ENCODE measurements at regions of chr17 and their contacts with region 1.

Region 1: GRCh38 chr17:49997791-49998703 is 3.0 kb upstream of the DLX3 start:
- DNase-seq: peak; percentile 58 to 91
- H3K4me3 ChIP-seq: no peak overlapping the region
- H3K27ac ChIP-seq: no peak overlapping the region
- H3K4me1 ChIP-seq: peaks cover 3 to 29% (median 11%) of the 10 kb centered on the region in 4 experiments; a peak in 6 of 7 replicates
- H3K27me3 ChIP-seq: peaks cover 32 to 66% (median 52%) of the 10 kb centered on the region in 4 experiments
- CTCF ChIP-seq: peak; percentile 72 to 94 (median 92)
- EP300 ChIP-seq: no peak
- POLR2A ChIP-seq: no peak
- RAD21 ChIP-seq: peak; percentile 99

Region 2: DNA sequence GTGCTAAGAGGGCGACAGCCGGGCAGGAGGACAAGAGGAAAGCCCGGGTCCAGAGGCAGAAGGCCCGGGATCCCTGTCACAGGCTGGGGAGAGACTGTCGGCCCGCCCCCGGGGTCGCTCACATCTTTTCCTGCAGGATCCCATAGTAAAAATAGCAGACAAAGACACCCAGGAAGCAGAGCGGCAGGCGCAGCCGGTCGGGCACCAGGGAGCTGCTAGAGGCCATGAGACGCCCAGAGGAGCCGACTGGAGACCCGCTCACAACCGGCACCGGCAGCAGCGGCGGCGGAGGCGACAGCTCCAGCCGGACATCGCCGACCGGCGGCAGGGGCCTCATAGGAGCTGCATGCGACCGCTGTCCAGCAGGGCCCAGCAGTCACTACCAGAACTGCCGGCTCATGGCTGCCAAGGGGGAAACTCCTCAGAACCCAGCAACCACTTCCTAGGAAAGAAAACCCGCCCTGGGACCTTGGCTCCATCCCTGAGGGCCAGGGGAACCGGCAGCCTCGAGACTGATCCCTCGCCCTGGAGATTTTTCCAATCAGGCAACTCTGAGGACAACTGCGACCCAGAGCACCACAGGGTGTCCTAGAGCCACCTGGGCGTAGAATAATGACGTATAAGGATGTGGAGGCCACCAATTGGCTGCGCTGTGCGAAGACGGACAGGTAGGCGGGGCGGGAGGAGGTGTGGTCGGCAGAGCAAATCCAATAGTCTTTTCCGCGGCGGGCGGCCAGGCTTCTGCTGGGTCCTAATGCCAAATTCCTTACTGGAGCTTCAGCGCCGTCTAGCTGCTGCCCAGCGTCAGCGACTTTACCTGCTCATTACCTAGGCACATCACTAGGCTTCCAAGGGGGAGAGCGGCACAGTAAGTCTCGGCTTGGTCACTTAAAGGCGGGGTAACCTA is 290.2 kb before region 1 on chr17 and contains the start of gene SLC35B1:
- CTCF ChIA-PET with region 1: interaction called, 34 read pairs
- POLR2A ChIA-PET with region 1: no interaction called
- DNase-seq: peak; percentile 94 to 97
- H3K4me3 ChIP-seq: peak within 1 kb of the TSS; percentile 76 to 97 (median 90)
- H3K27ac ChIP-seq: peak within 1 kb of the TSS; percentile 100
- H3K4me1 ChIP-seq: peaks cover 2 to 3% (median 3%) of the 10 kb centered on the region in 4 experiments; a peak in 6 of 7 replicates
- H3K27me3 ChIP-seq: no peaks in the 10 kb centered on the region
- CTCF ChIP-seq: peak; percentile 90 to 95 (median 91)
- EP300 ChIP-seq: 0 out of 3 replicates have a peak, but pooled peaks of 1 of the 2 experiments have one; percentile 26
- POLR2A ChIP-seq: peak; percentile 79 to 88
- RAD21 ChIP-seq: peak; percentile 52 to 68
- total RNA-seq, gene SLC35B1: 56.5 and 60.0 TPM in 2 replicates

Region 3: GRCh38 chr17:49880291-49881053 is 117.6 kb before region 1 on chr17:
- CTCF ChIA-PET with region 1: interaction called, 217 read pairs
- POLR2A ChIA-PET with region 1: interaction called, 15 read pairs
- DNase-seq: peak; percentile 85 to 95
- H3K4me3 ChIP-seq: peak overlapping the region; percentile 17 to 61 (median 44); a peak in 6 of 8 replicates
- H3K27ac ChIP-seq: no peak overlapping the region
- H3K4me1 ChIP-seq: peaks cover 3 to 15% (median 9%) of the 10 kb centered on the region in 4 experiments
- H3K27me3 ChIP-seq: peaks cover 0 to 4% (median 1%) of the 10 kb centered on the region in 4 experiments; a peak in 5 of 7 replicates
- CTCF ChIP-seq: peak; percentile 89 to 96 (median 91)
- EP300 ChIP-seq: 0 out of 3 replicates have a peak, but pooled peaks of 1 of the 2 experiments have one; percentile 36
- POLR2A ChIP-seq: no peak
- RAD21 ChIP-seq: peak; percentile 92 to 93

Region 4: DNA sequence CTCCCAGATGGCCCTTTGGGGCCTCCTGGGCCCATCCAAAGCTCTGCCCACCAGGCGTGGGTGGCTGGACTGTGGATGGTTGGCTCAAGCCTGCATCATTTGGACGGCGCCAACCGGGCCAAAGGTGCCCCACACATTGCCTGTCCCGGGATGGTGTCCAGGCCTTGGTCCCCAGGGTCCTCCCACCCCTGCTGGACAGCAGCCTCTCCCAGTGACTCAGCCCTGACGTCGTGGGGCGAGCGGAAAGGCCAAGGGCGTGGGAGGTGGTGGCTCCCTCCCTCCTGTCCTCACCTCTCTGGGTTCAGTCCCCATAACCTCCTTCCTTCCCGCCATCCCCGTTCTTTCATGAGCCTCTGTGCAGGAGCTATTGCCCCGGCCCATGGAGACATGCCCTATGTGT is 71.2 kb before region 1 on chr17:
- CTCF ChIA-PET with region 1: interaction called, 21 read pairs
- POLR2A ChIA-PET with region 1: interaction called, 3 read pairs
- DNase-seq: no peak
- H3K4me3 ChIP-seq: no peak overlapping the region
- H3K27ac ChIP-seq: no peak overlapping the region
- H3K4me1 ChIP-seq: no peaks in the 10 kb centered on the region
- H3K27me3 ChIP-seq: no peaks in the 10 kb centered on the region
- CTCF ChIP-seq: no peak
- EP300 ChIP-seq: no peak
- POLR2A ChIP-seq: no peak
- RAD21 ChIP-seq: no peak

Region 5: GRCh38 chr17:49959183-49959935 is 38.7 kb before region 1 on chr17:
- CTCF ChIA-PET with region 1: interaction called, 275 read pairs
- POLR2A ChIA-PET with region 1: interaction called, 13 read pairs
- DNase-seq: no peak
- H3K4me3 ChIP-seq: no peak overlapping the region
- H3K27ac ChIP-seq: no peak overlapping the region
- H3K4me1 ChIP-seq: peaks cover 0 to 20% (median 14%) of the 10 kb centered on the region in 4 experiments; a peak in 6 of 7 replicates
- H3K27me3 ChIP-seq: peaks cover 21 to 36% (median 31%) of the 10 kb centered on the region in 4 experiments
- CTCF ChIP-seq: no peak
- EP300 ChIP-seq: no peak
- POLR2A ChIP-seq: no peak
- RAD21 ChIP-seq: no peak

Region 6: GRCh38 chr17:50026901-50027630 is 29.0 kb after region 1 on chr17:
- CTCF ChIA-PET with region 1: interaction called, 16 read pairs
- POLR2A ChIA-PET with region 1: interaction called, 3 read pairs
- DNase-seq: peak; percentile 44 to 98
- H3K4me3 ChIP-seq: peak overlapping the region in 1 of 4 experiments; percentile 35; a peak in 1 of 8 replicates
- H3K27ac ChIP-seq: no peak overlapping the region
- H3K4me1 ChIP-seq: peaks cover 0 to 20% (median 14%) of the 10 kb centered on the region in 4 experiments; a peak in 6 of 7 replicates
- H3K27me3 ChIP-seq: 0 out of 7 replicates have a peak, but pooled peaks cover 0 to 5% (median 0%) of the 10 kb centered on the region in 4 experiments
- CTCF ChIP-seq: peak; percentile 94 to 98 (median 96)
- EP300 ChIP-seq: no peak
- POLR2A ChIP-seq: no peak
- RAD21 ChIP-seq: peak; percentile 82 to 85

Measured in H1 (cell line).